Heart right ventricle (tissue), 16 donors: ENCODE measurements at regions of chr17 and their contacts with region 1.

Region 1: DNA sequence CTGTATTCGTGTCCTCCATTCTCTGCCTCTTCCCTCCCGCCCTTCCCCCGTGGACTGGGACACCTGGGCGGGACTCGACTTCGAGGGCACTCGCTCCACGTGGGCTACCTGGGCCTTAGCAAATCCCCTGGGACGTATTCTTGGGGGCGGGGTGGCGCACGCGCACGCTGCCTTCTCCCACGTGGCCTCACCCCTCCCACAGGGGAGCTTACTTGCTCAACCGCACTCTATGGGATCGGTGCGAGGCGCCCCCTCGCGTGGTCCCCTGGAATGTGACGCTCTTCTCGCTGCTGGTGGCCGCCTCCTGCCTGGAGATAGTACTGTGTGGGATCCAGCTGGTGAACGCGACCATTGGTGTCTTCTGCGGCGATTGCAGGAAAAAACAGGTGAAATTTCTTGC is 3.5 kb downstream of the VMO1 start:
- DNase-seq: peak in 1 of 2 donors; percentile 29
- ATAC-seq: no peak
- H3K4me3 ChIP-seq: no peak overlapping the region
- H3K27ac ChIP-seq: no peak overlapping the region
- H3K4me1 ChIP-seq: peaks cover 16 to 29% (median 27%) of the 10 kb centered on the region in 9 donors
- H3K27me3 ChIP-seq: peaks cover 0 to 87% (median 66%) of the 10 kb centered on the region in 7 donors
- CTCF ChIP-seq: no peak

Region 2: GRCh38 chr17:4739122-4740024 is 43.3 kb before region 1 on chr17 and contains the starts of genes CXCL16 and ZMYND15:
- intact Hi-C with region 1: loop called in 8 of 10 experiments (anchors 5 to 10 kb)
- DNase-seq: peak; percentile 52 to 58
- ATAC-seq: peak; percentile 52 to 76 (median 66)
- H3K4me3 ChIP-seq: peak within 1 kb of the TSS; percentile 50 to 95 (median 84)
- H3K27ac ChIP-seq: peak within 1 kb of the TSS in 8 of 10 donors; percentile 1 to 82 (median 71)
- H3K4me1 ChIP-seq: peaks cover 2 to 48% (median 13%) of the 10 kb centered on the region in 9 donors
- H3K27me3 ChIP-seq: peaks cover 0 to 41% (median 8%) of the 10 kb centered on the region in 7 donors
- CTCF ChIP-seq: no peak
- total RNA-seq, gene CXCL16: 2.8 to 29.6 (median 4.2) TPM
- total RNA-seq, gene ZMYND15: 0.15 to 2.1 (median 0.38) TPM in 9 of 10 donors, not detected in the other